T-cell (primary cell): ENCODE measurements at regions of chr11 and their contacts with region 1.

Region 1: DNA sequence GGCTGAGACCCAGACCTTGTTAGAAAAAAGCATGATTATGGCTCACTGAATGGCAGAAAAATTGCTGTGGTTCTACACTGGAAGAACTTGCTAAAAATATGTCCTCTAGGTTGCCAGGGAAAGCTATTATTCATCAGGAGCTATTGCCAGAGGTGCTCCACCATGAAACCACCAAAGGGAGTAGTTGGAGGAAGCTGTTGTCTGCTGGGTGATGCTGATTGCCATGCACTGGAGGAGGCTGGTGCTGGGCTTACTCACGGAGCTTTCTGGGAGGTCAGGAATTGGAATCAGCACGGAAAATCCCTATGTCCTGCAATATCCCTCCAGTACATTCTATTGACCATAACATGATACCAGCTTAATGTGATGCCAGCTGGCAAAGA is 199.6 kb upstream of the ZBED5 start:
- DNase-seq: no peak
- ATAC-seq: no peak
- H3K4me3 ChIP-seq: no peak overlapping the region
- H3K4me3 Mint-ChIP-seq: no peak overlapping the region
- H3K27ac ChIP-seq: no peak overlapping the region
- H3K27ac Mint-ChIP-seq: no peak overlapping the region
- H3K4me1 ChIP-seq: no peaks in the 10 kb centered on the region
- H3K4me1 Mint-ChIP-seq: no peaks in the 10 kb centered on the region
- H3K27me3 ChIP-seq: no peaks in the 10 kb centered on the region
- H3K27me3 Mint-ChIP-seq: peaks cover 0 to 1% of the 10 kb centered on the region in 2 donors

Region 2: DNA sequence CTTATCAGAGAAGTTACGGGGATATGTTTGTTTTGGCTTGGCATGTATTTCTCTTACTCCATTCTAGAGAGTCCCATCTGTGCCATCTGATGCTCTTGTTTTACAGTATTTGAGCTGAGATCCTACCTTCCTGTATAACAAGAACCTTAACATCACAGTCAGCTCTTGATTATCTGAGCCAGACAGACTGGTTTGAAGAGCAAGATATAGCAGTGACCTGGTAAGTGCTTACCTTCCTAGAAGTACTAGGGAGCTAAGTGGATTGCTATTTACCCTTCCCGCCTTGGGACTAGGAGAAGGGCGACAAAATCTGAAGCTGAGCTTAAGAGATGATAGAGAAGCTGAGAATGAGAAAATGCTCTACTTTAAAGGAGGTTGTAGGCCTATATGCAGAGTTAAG is 60.3 kb after region 1 on chr11:
- CTCF ChIA-PET with region 1: no interaction called
- POLR2A ChIA-PET with region 1: no interaction called
- DNase-seq: no peak
- ATAC-seq: no peak
- H3K4me3 ChIP-seq: no peak overlapping the region
- H3K4me3 Mint-ChIP-seq: no peak overlapping the region
- H3K27ac ChIP-seq: no peak overlapping the region
- H3K27ac Mint-ChIP-seq: no peak overlapping the region
- H3K4me1 ChIP-seq: no peaks in the 10 kb centered on the region
- H3K4me1 Mint-ChIP-seq: peaks cover 0 to 17% (median 4%) of the 10 kb centered on the region in 3 donors
- H3K27me3 ChIP-seq: no peaks in the 10 kb centered on the region
- H3K27me3 Mint-ChIP-seq: no peaks in the 10 kb centered on the region

Region 3: GRCh38 chr11:11207428-11207827 is 150.0 kb after region 1 on chr11:
- CTCF ChIA-PET with region 1: no interaction called
- POLR2A ChIA-PET with region 1: no interaction called
- DNase-seq: peak in 1 of 35 experiments; percentile 25
- ATAC-seq: no peak
- H3K4me3 ChIP-seq: no peak overlapping the region
- H3K4me3 Mint-ChIP-seq: no peak overlapping the region
- H3K27ac ChIP-seq: no peak overlapping the region
- H3K27ac Mint-ChIP-seq: no peak overlapping the region
- H3K4me1 ChIP-seq: no peaks in the 10 kb centered on the region
- H3K4me1 Mint-ChIP-seq: no peaks in the 10 kb centered on the region
- H3K27me3 ChIP-seq: peaks cover 0 to 11% of the 10 kb centered on the region in 2 experiments
- H3K27me3 Mint-ChIP-seq: peaks cover 14 to 19% of the 10 kb centered on the region in 2 donors

Region 4: GRCh38 chr11:11270203-11270775 is 212.8 kb after region 1 on chr11:
- CTCF ChIA-PET with region 1: no interaction called
- POLR2A ChIA-PET with region 1: no interaction called
- DNase-seq: no peak
- ATAC-seq: no peak
- H3K4me3 ChIP-seq: no peak overlapping the region
- H3K4me3 Mint-ChIP-seq: no peak overlapping the region
- H3K27ac ChIP-seq: no peak overlapping the region
- H3K27ac Mint-ChIP-seq: no peak overlapping the region
- H3K4me1 ChIP-seq: no peaks in the 10 kb centered on the region
- H3K4me1 Mint-ChIP-seq: no peaks in the 10 kb centered on the region
- H3K27me3 ChIP-seq: peaks cover 0 to 13% of the 10 kb centered on the region in 2 experiments
- H3K27me3 Mint-ChIP-seq: peaks cover 2 to 5% of the 10 kb centered on the region in 2 donors

Region 5: GRCh38 chr11:11391796-11392195 is 334.3 kb after region 1 on chr11:
- CTCF ChIA-PET with region 1: no interaction called
- POLR2A ChIA-PET with region 1: no interaction called
- DNase-seq: no peak
- ATAC-seq: no peak
- H3K4me3 ChIP-seq: no peak overlapping the region
- H3K4me3 Mint-ChIP-seq: no peak overlapping the region
- H3K27ac ChIP-seq: no peak overlapping the region
- H3K27ac Mint-ChIP-seq: no peak overlapping the region
- H3K4me1 ChIP-seq: no peaks in the 10 kb centered on the region
- H3K4me1 Mint-ChIP-seq: no peaks in the 10 kb centered on the region
- H3K27me3 ChIP-seq: peaks cover 0 to 12% of the 10 kb centered on the region in 2 experiments
- H3K27me3 Mint-ChIP-seq: peaks cover 2 to 6% of the 10 kb centered on the region in 2 donors

Region 6: DNA sequence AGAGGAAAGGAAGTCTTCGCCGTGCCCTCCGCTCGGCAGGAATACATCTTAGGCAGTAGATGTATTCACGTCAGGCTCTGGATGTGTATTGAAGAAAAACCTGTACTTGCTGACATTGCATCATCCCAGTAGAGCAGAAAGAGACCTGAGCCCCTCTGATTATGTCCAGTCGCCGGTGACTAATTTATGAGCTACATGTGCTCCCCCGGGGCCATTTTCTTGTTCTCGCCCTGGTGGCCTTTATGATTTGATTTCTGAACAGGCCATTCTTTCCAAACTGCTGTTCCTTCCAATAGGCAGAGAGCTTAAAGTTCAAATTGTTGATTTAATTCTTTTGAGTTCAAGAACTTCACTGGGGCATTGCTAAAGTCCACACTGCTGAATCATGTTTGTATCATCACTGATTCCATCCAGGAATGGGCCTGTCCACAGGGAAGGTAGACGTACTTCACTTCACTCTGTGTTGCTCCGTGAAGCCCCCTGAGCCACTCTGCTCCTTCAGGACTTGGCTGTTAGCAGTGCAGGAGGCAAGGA is 1814.4 kb after region 1 on chr11:
- CTCF ChIA-PET with region 1: no interaction called
- POLR2A ChIA-PET with region 1: interaction called in 1 of 2 experiments, 11 read pairs
- DNase-seq: no peak
- ATAC-seq: no peak
- H3K4me3 ChIP-seq: no peak overlapping the region
- H3K4me3 Mint-ChIP-seq: no peak overlapping the region
- H3K27ac ChIP-seq: no peak overlapping the region
- H3K27ac Mint-ChIP-seq: no peak overlapping the region
- H3K4me1 ChIP-seq: no peaks in the 10 kb centered on the region
- H3K4me1 Mint-ChIP-seq: no peaks in the 10 kb centered on the region
- H3K27me3 ChIP-seq: peaks cover 0 to 13% of the 10 kb centered on the region in 2 experiments
- H3K27me3 Mint-ChIP-seq: peaks cover 14 to 23% of the 10 kb centered on the region in 2 donors